ENCODE measurements at regions of chr17 and their contacts with region 1.

Region 1: GRCh38 chr17:44979426-44979995 is 11.4 kb upstream of the C1QL1 start:
- DNase-seq: peak; percentile 68 to 80 (median 78)
- H3K4me3 ChIP-seq: no peak overlapping the region
- H3K27ac ChIP-seq: peak overlapping the region; percentile 37 to 64
- H3K4me1 ChIP-seq: peaks cover 24% of the 10 kb centered on the region
- H3K27me3 ChIP-seq: no peaks in the 10 kb centered on the region
- CTCF ChIP-seq: no peak
- EP300 ChIP-seq: no peak
- POLR2A ChIP-seq: no peak

Region 2: GRCh38 chr17:44961921-44962350 is 17.6 kb before region 1 on chr17:
- intact Hi-C with region 1: loop called in 1 of 4 experiments (anchors 2 kb)
- DNase-seq: no peak
- H3K4me3 ChIP-seq: no peak overlapping the region
- H3K27ac ChIP-seq: no peak overlapping the region
- H3K4me1 ChIP-seq: peaks cover 2% of the 10 kb centered on the region
- H3K27me3 ChIP-seq: peaks cover 6% of the 10 kb centered on the region
- CTCF ChIP-seq: no peak
- EP300 ChIP-seq: no peak
- POLR2A ChIP-seq: no peak